Activated CD8-positive, alpha-beta T cell treated with anti-CD3 and anti-CD28 coated beads, Interleukin-2, amount 10 ng/mL, durations not matched to agents 7 days and 5 days (primary cell): ENCODE measurements at regions of chr1 and their contacts with region 1.

Region 1: GRCh38 chr1:117605774-117606648 is at the start of gene TENT5C:
- DNase-seq: peak; percentile 99
- ATAC-seq: peak; percentile 83
- H3K4me3 Mint-ChIP-seq: peak within 1 kb of the TSS; percentile 97
- H3K27ac Mint-ChIP-seq: peak within 1 kb of the TSS; percentile 94
- H3K4me1 Mint-ChIP-seq: peaks cover 49% of the 10 kb centered on the region
- H3K27me3 Mint-ChIP-seq: peaks cover 13% of the 10 kb centered on the region
- total RNA-seq, gene TENT5C: 20.7 to 20.8 TPM

Region 2: DNA sequence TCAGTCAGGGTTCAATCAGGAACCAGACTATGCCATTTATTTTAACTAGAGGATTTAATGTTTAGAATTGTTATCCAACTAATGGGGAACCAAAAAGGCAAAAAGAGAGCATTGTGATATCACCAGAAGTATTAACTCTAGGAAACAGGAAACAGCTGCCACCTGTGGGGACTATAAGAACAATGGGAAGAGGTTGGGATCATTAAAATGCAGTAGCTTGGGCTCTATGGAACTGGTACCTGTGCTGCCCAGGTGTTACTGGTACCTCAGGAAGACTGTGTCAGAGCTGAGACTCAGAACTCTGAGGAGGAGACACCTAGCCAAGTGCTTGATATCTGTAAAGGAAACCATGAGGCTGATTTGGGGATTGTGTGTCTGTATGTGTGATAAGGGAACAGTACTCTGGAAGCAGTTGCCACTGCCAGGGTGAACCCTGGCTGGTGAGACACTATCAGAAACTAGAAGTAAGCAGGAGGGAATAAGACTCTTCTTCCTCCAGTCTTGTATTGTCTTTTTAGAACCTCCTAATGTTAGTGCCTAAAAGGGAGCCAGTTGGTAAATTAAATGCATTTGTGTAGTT is 189.4 kb before region 1 on chr1:
- CTCF ChIA-PET with region 1: no interaction called
- POLR2A ChIA-PET with region 1: no interaction called
- DNase-seq: no peak
- ATAC-seq: no peak
- H3K4me3 Mint-ChIP-seq: no peak overlapping the region
- H3K27ac Mint-ChIP-seq: no peak overlapping the region
- H3K4me1 Mint-ChIP-seq: no peaks in the 10 kb centered on the region
- H3K27me3 Mint-ChIP-seq: no peaks in the 10 kb centered on the region

Region 3: GRCh38 chr1:117654493-117655219 is 48.6 kb after region 1 on chr1:
- CTCF ChIA-PET with region 1: interaction called, 29 read pairs
- POLR2A ChIA-PET with region 1: interaction called, 37 read pairs
- DNase-seq: no peak
- ATAC-seq: peak; percentile 7
- H3K4me3 Mint-ChIP-seq: peak overlapping the region; percentile 25
- H3K27ac Mint-ChIP-seq: peak overlapping the region; percentile 86
- H3K4me1 Mint-ChIP-seq: peaks cover 76% of the 10 kb centered on the region
- H3K27me3 Mint-ChIP-seq: peaks cover 22% of the 10 kb centered on the region

Region 4: DNA sequence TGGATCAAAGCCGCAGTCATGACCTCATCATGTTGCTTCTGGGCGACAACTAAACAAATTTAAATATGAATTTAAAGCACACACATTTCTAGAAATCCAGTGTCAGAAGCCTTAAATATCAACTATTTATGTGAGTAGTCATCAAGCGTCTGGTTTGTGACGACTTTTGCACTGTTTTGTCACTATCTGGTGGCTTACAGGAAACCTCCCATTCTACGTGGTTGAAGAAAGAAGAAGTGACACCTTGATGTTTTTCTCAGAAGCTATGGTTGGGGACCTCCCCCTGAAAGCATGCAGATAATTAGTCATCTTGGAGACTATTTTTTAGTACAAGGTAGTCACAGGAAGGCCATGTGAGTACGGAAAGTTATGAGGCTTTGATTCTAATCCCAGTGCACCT is 58.3 kb after region 1 on chr1:
- CTCF ChIA-PET with region 1: interaction called, 26 read pairs
- POLR2A ChIA-PET with region 1: interaction called, 37 read pairs
- DNase-seq: peak; percentile 86
- ATAC-seq: peak; percentile 73
- H3K4me3 Mint-ChIP-seq: peak overlapping the region; percentile 36
- H3K27ac Mint-ChIP-seq: peak overlapping the region; percentile 84
- H3K4me1 Mint-ChIP-seq: peaks cover 84% of the 10 kb centered on the region
- H3K27me3 Mint-ChIP-seq: peaks cover 3% of the 10 kb centered on the region